H1 (cell line): ENCODE measurements at regions of chr5 and their contacts with region 1.

Region 1: DNA sequence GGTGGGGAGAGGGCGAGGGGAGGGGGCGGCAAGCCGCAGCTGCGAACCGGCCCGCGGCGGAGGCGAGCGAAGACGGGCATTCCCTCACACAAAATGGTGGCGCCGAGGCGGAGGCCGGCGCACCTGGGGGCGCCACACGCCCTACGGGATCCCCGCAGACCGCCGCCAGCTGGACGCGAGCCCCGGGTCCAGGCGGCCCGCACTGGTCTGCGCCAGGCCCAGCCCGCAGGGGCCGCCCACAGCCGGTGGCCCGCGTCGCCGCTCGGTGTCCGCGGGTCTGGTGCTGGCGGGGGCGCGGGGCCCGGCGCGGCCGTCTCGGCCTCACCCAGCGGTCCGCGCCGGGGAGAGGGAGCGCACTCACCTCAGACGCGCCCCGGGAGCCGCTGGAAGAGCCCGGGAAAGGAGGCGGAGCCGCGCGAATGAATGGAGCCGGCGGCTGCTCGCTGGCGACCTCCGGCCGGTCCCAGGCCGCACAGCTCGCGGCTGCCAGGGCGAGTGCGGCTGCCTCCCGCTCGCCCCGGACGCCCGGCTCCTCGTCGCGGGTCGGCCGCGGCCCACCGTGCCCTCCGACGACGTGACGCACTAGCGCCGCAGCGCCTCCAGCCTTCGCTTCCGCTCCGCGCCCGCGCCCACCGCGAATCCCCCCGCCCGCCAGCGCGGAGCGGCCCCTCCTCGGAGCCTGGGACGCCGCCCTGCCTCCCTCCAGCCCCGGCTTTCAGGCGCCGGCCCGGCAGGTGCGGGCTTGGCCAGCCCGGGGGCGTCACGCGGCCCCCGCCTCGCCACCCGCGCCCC is at the start of gene FAM169A:
- DNase-seq: peak in 1 of 2 experiments; percentile 78
- H3K4me3 ChIP-seq: peak within 1 kb of the TSS; percentile 90 to 99 (median 92)
- H3K27ac ChIP-seq: peak within 1 kb of the TSS; percentile 93
- H3K4me1 ChIP-seq: peaks cover 2 to 29% (median 16%) of the 10 kb centered on the region in 4 experiments; a peak in 6 of 7 replicates
- H3K27me3 ChIP-seq: no peaks in the 10 kb centered on the region
- CTCF ChIP-seq: peak in 1 of 3 experiments; percentile 16; a peak in 1 of 4 replicates
- EP300 ChIP-seq: peak in 1 of 2 experiments; percentile 36; a peak in 1 of 3 replicates
- POLR2A ChIP-seq: peak; percentile 28 to 84
- RAD21 ChIP-seq: no peak; a peak in 1 of 4 replicates
- total RNA-seq, gene FAM169A: 78.7 and 83.1 TPM in 2 replicates

Region 2: DNA sequence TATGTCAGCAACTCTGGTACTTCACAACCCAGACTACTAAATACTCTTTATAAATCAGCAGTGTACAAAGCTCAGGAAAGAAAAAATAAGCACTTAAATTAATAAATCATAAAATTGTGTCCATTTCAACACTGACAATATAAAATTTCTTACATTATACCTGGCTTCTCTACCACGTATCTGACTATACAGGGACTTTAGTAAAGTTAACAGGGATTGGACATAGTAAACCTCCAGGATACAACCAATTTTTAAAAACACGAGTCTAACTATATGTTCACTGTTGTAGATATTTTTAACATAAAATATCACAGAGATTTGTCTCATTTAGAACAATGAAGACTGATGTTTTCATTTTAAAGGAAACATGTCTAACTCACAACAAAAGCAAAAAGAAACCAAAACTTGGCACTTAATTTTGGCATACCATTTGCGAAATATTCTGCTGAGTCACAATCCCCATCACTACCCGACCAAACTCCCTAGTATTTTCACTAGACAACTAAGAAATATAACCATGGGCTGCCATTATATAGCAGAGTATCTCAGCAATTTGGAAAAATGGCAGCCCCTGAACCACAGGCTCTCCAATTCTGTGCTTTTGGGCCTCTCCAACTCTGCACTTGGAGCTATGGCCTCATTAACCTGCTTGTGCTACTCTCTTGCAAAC is 14.2 kb before region 1 on chr5:
- CTCF ChIA-PET with region 1: interaction called, 3 read pairs
- POLR2A ChIA-PET with region 1: interaction called, 28 read pairs
- DNase-seq: no peak
- H3K4me3 ChIP-seq: no peak overlapping the region
- H3K27ac ChIP-seq: no peak overlapping the region
- H3K4me1 ChIP-seq: peaks cover 0 to 8% (median 3%) of the 10 kb centered on the region in 4 experiments; a peak in 2 of 7 replicates
- H3K27me3 ChIP-seq: no peaks in the 10 kb centered on the region
- CTCF ChIP-seq: no peak
- EP300 ChIP-seq: no peak
- POLR2A ChIP-seq: no peak
- RAD21 ChIP-seq: no peak

Region 3: DNA sequence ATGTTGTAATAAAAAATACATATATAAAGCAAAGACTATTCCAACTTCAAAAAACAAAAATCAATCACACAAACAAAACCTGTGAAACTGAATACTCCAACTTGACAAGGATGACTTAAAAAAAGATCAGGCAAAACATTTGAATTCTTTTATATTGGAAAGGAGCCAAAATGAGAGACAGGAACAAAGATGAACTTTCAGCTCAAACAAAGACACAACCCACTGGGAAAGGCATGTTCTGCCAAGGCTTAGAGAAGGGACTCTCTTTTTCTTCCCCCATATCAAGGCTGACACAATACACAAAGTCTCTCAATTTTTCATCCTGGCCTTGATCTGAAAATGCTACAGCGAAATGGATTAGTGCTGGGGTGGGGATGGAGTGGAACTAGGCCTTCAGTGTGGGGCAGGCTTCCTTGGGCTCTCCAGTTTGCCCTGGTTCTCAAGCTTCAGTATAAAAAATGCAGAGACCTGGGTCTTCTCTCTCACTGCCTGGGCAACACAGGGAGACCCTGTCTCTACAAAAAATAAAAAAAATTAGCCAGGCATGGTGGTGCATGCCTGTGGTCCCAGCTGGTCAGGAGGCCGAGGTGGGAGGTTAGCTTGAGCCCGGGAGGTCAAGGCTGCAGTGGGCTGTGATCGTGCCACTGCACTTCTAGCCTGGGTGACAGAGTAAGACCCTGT is 11.8 kb after region 1 on chr5:
- CTCF ChIA-PET with region 1: interaction called, 3 read pairs
- POLR2A ChIA-PET with region 1: interaction called, 31 read pairs
- DNase-seq: no peak
- H3K4me3 ChIP-seq: no peak overlapping the region
- H3K27ac ChIP-seq: no peak overlapping the region
- H3K4me1 ChIP-seq: peaks cover 0 to 4% (median 1%) of the 10 kb centered on the region in 4 experiments; a peak in 2 of 7 replicates
- H3K27me3 ChIP-seq: no peaks in the 10 kb centered on the region
- CTCF ChIP-seq: no peak
- EP300 ChIP-seq: no peak
- POLR2A ChIP-seq: no peak
- RAD21 ChIP-seq: no peak